ENCODE measurements at regions of chrX and their contacts with region 1.

Region 1: GRCh38 chrX:150772150-150772970 is 79.2 kb downstream of the MTMR1 start:
- DNase-seq: peak; percentile 70
- H3K4me3 ChIP-seq: no peak overlapping the region
- H3K27ac ChIP-seq: no peak overlapping the region
- H3K4me1 ChIP-seq: no peaks in the 10 kb centered on the region
- H3K27me3 ChIP-seq: no peaks in the 10 kb centered on the region
- CTCF ChIP-seq: peak; percentile 76

Region 2: GRCh38 chrX:151082076-151082948 is 310.0 kb after region 1 on chrX:
- CTCF ChIA-PET with region 1: interaction called, 39 read pairs
- POLR2A ChIA-PET with region 1: no interaction called
- intact Hi-C with region 1: loop called (anchors 1 kb)
- DNase-seq: peak; percentile 74
- H3K4me3 ChIP-seq: no peak overlapping the region
- H3K27ac ChIP-seq: no peak overlapping the region
- H3K4me1 ChIP-seq: no peaks in the 10 kb centered on the region
- H3K27me3 ChIP-seq: no peaks in the 10 kb centered on the region
- CTCF ChIP-seq: peak; percentile 96

Region 3: DNA sequence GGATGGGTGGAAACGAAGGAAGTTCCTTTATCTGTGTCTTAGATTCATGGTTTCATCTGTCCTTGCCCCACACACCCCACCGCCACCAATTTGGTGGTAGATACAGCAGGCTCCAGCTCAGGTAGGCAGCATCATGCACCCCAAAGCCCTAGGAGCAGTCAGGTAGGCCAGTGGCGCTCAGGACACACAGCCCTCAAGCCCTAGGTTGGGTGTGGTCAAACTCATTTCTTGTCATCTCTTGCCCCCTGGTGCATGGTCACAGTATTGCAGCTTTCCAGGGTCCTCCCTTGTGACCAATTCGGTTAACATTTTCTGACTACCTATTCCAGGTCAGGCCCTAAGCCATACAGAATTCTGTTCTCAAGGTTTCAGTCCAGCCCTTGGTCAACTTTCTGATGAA is 908.4 kb after region 1 on chrX:
- CTCF ChIA-PET with region 1: no interaction called
- POLR2A ChIA-PET with region 1: no interaction called
- intact Hi-C with region 1: loop called (anchors 5 kb)
- DNase-seq: peak; percentile 58
- H3K4me3 ChIP-seq: no peak overlapping the region
- H3K27ac ChIP-seq: no peak overlapping the region
- H3K4me1 ChIP-seq: no peaks in the 10 kb centered on the region
- H3K27me3 ChIP-seq: peaks cover 8% of the 10 kb centered on the region
- CTCF ChIP-seq: peak; percentile 74

Measured in A673 (cell line).